ENCODE measurements at regions of chr7 and their contacts with region 1.

Region 1: GRCh38 chr7:51175316-51175991 is 141.2 kb downstream of the COBL start:
- DNase-seq: no peak
- H3K4me3 ChIP-seq: no peak overlapping the region
- H3K27ac ChIP-seq: no peak overlapping the region
- H3K4me1 ChIP-seq: no peaks in the 10 kb centered on the region
- H3K27me3 ChIP-seq: no peaks in the 10 kb centered on the region
- CTCF ChIP-seq: no peak
- POLR2A ChIP-seq: no peak

Region 2: DNA sequence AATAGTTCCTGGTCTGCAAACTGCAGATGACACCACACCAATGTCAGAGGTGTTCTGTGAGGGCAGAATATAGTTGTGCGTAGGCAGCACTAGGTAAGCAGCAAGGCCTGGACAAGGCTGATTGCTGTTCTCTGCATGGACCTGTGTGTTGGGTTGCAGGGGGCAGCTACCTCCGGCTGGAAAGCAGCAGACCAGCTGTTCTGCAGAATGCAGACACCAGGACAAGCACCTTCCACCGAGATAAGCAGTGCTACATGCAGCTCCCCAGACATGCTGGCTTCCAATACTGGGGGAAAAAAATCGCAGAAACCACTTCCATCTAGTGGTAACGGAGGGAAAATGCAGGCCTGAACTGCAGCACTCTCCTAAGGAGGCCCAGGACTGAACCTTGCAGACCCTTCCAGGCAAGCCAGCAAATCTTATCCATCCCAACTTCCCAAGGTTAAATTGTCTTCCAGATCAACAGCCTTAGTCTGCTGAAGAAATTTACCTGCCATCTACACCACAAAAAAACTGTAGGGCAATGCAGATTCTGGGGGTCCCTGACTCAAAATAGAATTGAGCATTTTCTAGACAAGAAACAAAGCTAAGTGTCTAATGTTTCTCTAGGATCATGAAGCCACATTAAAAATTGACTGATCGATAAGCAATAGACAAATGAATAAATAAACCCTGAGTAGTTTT is 191.6 kb after region 1 on chr7:
- intact Hi-C with region 1: loop called (anchors 10 kb)
- DNase-seq: no peak
- H3K4me3 ChIP-seq: no peak overlapping the region
- H3K27ac ChIP-seq: no peak overlapping the region
- H3K4me1 ChIP-seq: no peaks in the 10 kb centered on the region
- H3K27me3 ChIP-seq: no peaks in the 10 kb centered on the region
- CTCF ChIP-seq: peak; percentile 8 to 76 (median 67)
- POLR2A ChIP-seq: no peak

Region 3: GRCh38 chr7:53101006-53101405 is 1925.6 kb after region 1 on chr7:
- intact Hi-C with region 1: no loop called
- DNase-seq: no peak
- H3K4me3 ChIP-seq: no peak overlapping the region
- H3K27ac ChIP-seq: no peak overlapping the region
- H3K4me1 ChIP-seq: no peaks in the 10 kb centered on the region
- H3K27me3 ChIP-seq: no peaks in the 10 kb centered on the region
- CTCF ChIP-seq: no peak
- POLR2A ChIP-seq: no peak

Measured in breast epithelium (tissue), 4 donors.